Adrenal gland (tissue), 19 donors: ENCODE measurements at regions of chr3 and their contacts with region 1.

Region 1: GRCh38 chr3:30768703-30769685 is 125.5 kb downstream of the GADL1 start:
- DNase-seq: peak; percentile 59 to 90 (median 79)
- H3K4me3 ChIP-seq: no peak overlapping the region
- H3K27ac ChIP-seq: no peak overlapping the region
- H3K4me1 ChIP-seq: no peaks in the 10 kb centered on the region
- H3K27me3 ChIP-seq: no peaks in the 10 kb centered on the region
- CTCF ChIP-seq: peak; percentile 68 to 89 (median 78)
- POLR2A ChIP-seq: no peak

Region 2: DNA sequence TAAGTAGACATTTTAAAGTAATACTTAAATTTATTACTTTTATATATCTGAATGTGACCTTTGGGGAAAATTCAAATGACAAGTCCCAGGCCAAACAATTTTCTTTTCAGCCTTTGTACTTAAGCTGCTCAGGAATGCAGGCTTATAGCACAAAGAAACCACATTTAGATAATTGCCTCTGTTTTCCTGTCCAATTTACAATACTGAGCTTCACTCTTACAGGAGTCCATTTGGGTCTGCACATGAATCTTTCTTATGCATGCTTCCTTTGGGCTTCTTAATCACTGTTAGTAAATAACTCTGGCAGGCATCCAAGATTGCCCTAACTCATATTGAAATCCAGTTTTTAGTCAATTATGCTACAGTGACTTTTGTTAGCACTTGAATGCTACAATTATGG is 622.0 kb before region 1 on chr3:
- intact Hi-C with region 1: no loop called
- DNase-seq: no peak
- H3K4me3 ChIP-seq: no peak overlapping the region
- H3K27ac ChIP-seq: no peak overlapping the region
- H3K4me1 ChIP-seq: peaks cover 2 to 3% of the 10 kb centered on the region in 2 donors
- H3K27me3 ChIP-seq: no peaks in the 10 kb centered on the region
- CTCF ChIP-seq: no peak
- POLR2A ChIP-seq: no peak

Region 3: GRCh38 chr3:31132132-31132769 is 363.3 kb after region 1 on chr3:
- intact Hi-C with region 1: loop called in 1 of 2 experiments (anchors 10 kb)
- DNase-seq: no peak
- H3K4me3 ChIP-seq: no peak overlapping the region
- H3K27ac ChIP-seq: no peak overlapping the region
- H3K4me1 ChIP-seq: no peaks in the 10 kb centered on the region
- H3K27me3 ChIP-seq: no peaks in the 10 kb centered on the region
- CTCF ChIP-seq: peak; percentile 13 to 66 (median 55)
- POLR2A ChIP-seq: no peak

Region 4: GRCh38 chr3:31531992-31532586 is 763.1 kb after region 1 on chr3:
- intact Hi-C with region 1: loop called in 1 of 2 experiments (anchors 10 kb)
- DNase-seq: peak; percentile 99 to 100 (median 99)
- H3K4me3 ChIP-seq: peak overlapping the region in 3 of 4 donors; percentile 34 to 90 (median 69)
- H3K27ac ChIP-seq: peak overlapping the region; percentile 90 to 99 (median 98)
- H3K4me1 ChIP-seq: peaks cover 0 to 30% of the 10 kb centered on the region in 2 donors
- H3K27me3 ChIP-seq: no peaks in the 10 kb centered on the region
- CTCF ChIP-seq: peak in 4 of 6 experiments; percentile 4 to 20 (median 10)
- POLR2A ChIP-seq: peak; percentile 79 to 93

Region 5: DNA sequence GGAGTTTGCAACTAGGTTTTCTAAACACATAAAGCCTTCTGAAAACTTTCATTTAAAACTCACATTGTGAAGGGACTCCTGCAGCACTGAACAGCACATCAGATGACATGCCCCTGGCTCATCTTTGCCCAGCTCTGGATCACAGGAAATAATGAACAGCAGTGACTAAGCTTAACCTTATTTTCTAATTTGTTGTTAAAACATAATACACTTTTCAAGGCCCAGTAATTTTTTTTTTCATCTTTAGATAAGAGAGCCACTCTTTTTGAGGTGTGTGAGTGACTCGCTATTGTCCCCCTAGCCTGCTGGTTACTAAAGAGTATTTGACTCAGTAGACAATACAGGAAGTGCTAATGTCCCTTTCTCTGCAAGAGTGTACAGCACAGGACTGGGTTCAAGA is 1008.1 kb after region 1 on chr3:
- intact Hi-C with region 1: loop called in 1 of 2 experiments (anchors 10 kb)
- DNase-seq: no peak
- H3K4me3 ChIP-seq: no peak overlapping the region
- H3K27ac ChIP-seq: no peak overlapping the region
- H3K4me1 ChIP-seq: no peaks in the 10 kb centered on the region
- H3K27me3 ChIP-seq: no peaks in the 10 kb centered on the region
- CTCF ChIP-seq: no peak
- POLR2A ChIP-seq: no peak